Mammary epithelial cell (primary cell): ENCODE measurements at regions of chr3 and their contacts with region 1.

Region 1: DNA sequence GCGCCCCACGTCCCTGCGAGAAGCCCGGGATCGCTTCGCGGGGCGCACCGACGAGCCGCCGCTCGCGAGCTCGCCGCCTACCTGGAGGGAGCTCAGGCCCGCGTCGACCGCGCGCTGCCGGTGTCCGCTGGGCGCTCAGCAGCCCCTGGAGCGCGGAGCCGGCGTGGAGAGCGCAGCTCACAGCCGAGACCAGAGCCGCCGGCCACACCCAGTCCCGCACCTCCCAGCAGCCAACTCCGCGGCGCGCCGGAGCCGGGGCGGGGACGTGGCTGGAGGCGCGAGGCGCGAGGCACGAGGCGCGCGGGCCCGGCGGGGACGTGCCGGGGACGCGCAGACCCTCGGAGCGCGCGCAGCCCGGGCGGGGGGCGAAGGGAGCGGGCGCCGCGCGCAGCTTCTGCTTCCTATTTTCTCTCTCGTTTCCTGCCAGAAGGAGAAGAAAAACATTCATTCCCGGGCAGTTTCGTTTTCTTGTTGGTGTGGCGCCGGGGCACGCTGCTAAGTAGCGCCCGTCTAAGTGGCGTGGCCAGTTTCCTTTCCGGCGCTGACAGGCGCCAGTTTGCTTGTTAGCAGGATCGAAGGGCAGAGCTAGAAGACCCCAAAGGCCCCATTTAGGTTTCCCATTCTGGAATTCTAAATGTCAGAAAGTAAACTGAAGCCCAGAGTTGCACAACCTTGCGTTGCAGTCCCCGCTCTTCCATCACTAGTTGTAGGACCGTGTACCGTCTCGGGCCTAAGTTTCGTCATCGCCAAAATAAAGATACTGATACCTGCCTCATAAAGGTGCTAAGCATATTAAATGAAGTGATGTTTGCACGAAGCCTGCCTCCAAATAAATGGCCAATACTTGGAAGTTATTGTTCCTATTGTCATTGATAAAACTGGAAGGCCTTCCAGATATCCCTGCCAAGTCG is at the start of gene GNB4:
- DNase-seq: peak; percentile 78
- H3K4me3 ChIP-seq: peak within 1 kb of the TSS; percentile 47 to 77 (median 71)
- H3K27ac ChIP-seq: peak within 1 kb of the TSS; percentile 63
- H3K4me1 ChIP-seq: peaks cover 29% of the 10 kb centered on the region
- H3K27me3 ChIP-seq: no peaks in the 10 kb centered on the region
- CTCF ChIP-seq: no peak
- total RNA-seq, gene GNB4: 52.3 to 201 TPM

Region 2: DNA sequence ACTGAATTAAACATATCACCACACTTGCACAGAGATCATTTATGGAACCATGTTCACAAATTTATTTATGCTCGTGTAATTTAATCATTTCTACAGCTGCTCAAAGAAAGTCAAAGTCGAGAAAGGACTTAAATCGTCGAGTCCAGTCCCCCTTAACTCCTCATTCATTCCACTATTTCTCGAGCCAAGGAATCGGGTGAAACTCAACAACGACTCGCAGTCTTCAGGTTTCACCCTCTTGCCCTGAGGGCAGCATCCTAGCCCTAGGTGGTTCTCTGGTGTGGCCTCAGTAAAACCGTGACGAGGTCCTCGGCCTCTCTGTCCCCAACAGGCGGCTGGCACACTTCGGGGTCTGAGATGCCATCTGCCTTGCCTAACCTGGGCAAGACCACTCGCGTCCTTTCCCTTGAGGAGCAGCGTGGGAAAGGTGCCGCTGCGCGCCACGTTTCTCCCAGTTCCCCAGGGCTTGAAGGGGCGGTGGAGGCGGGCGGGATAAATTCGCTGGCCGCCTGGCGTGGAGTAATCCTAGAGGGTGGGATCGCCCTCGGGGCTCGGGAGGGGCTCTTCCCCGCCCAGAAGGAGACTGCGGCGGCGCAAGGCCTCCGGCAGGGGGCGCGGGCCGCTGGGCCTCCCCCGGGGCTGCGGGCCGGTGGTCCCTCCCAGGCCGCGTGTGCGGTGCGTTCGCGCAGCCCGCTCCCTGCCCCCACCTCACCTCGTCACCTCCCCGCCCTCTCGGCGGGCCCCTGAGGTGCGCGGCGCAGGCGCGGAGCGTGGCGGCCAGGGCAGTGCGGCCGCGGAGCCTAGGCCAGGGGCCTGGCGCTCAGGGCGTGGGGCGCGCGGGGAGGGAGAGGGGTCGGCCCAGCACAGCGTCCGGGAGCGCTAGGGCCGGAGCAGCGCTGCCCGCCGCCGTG is 129.0 kb before region 1 on chr3 and contains the start of gene ZNF639:
- CTCF ChIA-PET with region 1: no interaction called
- dilution Hi-C with region 1: no loop called
- in situ Hi-C with region 1: no loop called
- intact Hi-C with region 1: loop called (anchors 5 kb)
- DNase-seq: peak; percentile 67
- H3K4me3 ChIP-seq: peak within 1 kb of the TSS; percentile 79 to 96 (median 80)
- H3K27ac ChIP-seq: peak within 1 kb of the TSS; percentile 63
- H3K4me1 ChIP-seq: peaks cover 25% of the 10 kb centered on the region
- H3K27me3 ChIP-seq: no peaks in the 10 kb centered on the region
- CTCF ChIP-seq: peak; percentile 41 to 58
- total RNA-seq, gene ZNF639: 25.3 to 27.7 TPM

Region 3: GRCh38 chr3:179421500-179421899 is 30.0 kb before region 1 on chr3:
- CTCF ChIA-PET with region 1: no interaction called
- dilution Hi-C with region 1: no loop called
- in situ Hi-C with region 1: no loop called
- intact Hi-C with region 1: loop called (anchors 2 kb)
- DNase-seq: peak; percentile 15
- H3K4me3 ChIP-seq: no peak overlapping the region
- H3K27ac ChIP-seq: no peak overlapping the region
- H3K4me1 ChIP-seq: no peaks in the 10 kb centered on the region
- H3K27me3 ChIP-seq: no peaks in the 10 kb centered on the region
- CTCF ChIP-seq: peak; percentile 37 to 57